Activated T-helper 1 cell treated with anti-CD3 and anti-CD28 coated beads, Interleukin-12 subunit alpha, Interleukin-12 subunit beta, Interleukin-2, Interleukin-4 antibody, amounts not matched to agents 30 ng/mL and 10 ng/mL and 1 ng/mL, durations not matched to agents 14 hours and 24 hours and 36 hours (primary cell): ENCODE measurements at regions of chr3 and their contacts with region 1.

Region 1: GRCh38 chr3:31754575-31755278 is 222.0 kb downstream of the STT3B start:
- DNase-seq: no peak
- H3K4me3 Mint-ChIP-seq: peak overlapping the region; percentile 66
- H3K27ac Mint-ChIP-seq: peak overlapping the region; percentile 94
- H3K4me1 Mint-ChIP-seq: peaks cover 61% of the 10 kb centered on the region
- H3K27me3 Mint-ChIP-seq: no peaks in the 10 kb centered on the region

Region 2: DNA sequence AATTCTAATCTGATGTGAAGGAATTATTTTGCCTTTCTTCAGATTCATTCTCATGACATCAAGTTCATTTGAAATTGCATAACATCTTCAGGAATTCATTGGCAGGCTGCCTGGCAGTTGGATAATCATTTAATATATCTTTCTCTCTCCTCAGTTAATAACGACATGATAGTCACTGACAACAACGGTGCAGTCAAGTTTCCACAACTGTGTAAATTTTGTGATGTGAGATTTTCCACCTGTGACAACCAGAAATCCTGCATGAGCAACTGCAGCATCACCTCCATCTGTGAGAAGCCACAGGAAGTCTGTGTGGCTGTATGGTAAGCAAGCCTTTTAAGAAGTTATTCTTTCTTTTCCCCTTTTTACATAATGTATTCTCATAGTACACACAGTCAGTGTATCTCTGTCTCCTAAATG is 1110.1 kb before region 1 on chr3:
- intact Hi-C with region 1: loop called (anchors 5 kb)
- DNase-seq: peak; percentile 66
- H3K4me3 Mint-ChIP-seq: peak overlapping the region; percentile 57
- H3K27ac Mint-ChIP-seq: peak overlapping the region; percentile 94
- H3K4me1 Mint-ChIP-seq: peaks cover 93% of the 10 kb centered on the region
- H3K27me3 Mint-ChIP-seq: no peaks in the 10 kb centered on the region

Region 3: DNA sequence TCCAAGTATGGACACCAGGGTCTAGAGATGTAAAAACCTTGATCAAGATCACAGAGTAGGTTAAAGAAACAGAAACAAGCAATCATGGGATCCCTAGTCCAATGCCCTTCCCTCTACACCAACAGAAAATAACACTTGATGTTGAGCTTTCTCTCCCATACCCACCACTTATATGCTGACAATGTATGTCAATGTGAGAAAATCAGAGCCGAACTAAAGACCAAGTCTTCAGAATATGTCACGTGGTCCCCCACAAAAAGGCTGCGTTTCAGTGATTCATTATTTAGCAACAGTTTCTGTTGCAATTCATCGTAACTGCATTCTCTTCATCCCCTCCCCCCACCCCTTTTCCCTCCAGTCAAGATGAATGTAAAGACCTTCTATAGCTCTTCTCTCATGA is 500.9 kb before region 1 on chr3:
- intact Hi-C with region 1: loop called (anchors 1 kb)
- DNase-seq: no peak
- H3K4me3 Mint-ChIP-seq: no peak overlapping the region
- H3K27ac Mint-ChIP-seq: peak overlapping the region; percentile 89
- H3K4me1 Mint-ChIP-seq: peaks cover 64% of the 10 kb centered on the region
- H3K27me3 Mint-ChIP-seq: peaks cover 3% of the 10 kb centered on the region

Region 4: DNA sequence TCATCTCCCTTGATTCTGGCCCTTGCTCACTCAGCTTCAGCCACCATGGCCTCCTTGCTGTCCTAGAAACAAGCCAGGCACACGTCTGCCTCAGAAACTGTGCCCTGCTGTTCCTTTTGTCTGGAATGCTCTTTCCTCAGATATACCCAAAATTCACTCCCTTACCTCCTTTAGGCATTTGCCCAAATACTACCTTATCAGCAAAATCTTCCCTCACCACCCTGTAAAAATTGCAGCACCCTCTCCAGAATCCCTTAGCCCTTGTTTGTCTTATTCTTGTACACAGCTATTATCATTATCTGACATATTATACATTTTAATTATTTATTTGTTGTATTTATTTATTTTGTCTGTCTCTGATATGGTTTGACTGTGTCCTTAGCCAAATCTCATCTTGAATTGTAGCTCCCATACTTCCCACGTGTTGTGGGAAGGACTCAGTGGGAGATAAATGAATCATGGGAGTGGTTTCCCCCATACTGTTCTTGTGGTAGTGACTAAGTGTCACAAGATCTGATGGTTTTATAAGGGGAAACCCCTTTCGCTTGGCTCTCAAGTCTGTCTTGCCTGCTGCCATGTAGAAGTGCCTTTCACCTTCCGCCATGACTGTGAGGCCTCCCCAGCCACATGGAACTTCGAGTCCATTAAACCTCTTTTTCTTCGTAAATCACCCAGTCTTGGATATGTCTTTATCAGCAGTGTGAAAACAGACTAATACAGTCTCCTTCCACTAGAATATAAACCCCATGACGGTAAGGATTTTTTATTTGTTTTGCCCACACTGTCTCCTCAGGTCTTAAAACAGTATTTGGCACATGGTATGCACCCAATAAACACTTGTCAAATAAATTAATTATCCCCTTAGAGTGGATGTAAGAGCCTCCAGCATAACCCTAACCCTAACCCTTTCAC is 282.0 kb before region 1 on chr3:
- intact Hi-C with region 1: loop called (anchors 5 kb)
- DNase-seq: peak; percentile 17
- H3K4me3 Mint-ChIP-seq: no peak overlapping the region
- H3K27ac Mint-ChIP-seq: peak overlapping the region; percentile 59
- H3K4me1 Mint-ChIP-seq: peaks cover 19% of the 10 kb centered on the region
- H3K27me3 Mint-ChIP-seq: peaks cover 9% of the 10 kb centered on the region

Region 5: GRCh38 chr3:31624083-31624709 is 130.5 kb before region 1 on chr3:
- intact Hi-C with region 1: no loop called
- DNase-seq: no peak
- H3K4me3 Mint-ChIP-seq: no peak overlapping the region
- H3K27ac Mint-ChIP-seq: peak overlapping the region; percentile 9
- H3K4me1 Mint-ChIP-seq: peaks cover 37% of the 10 kb centered on the region
- H3K27me3 Mint-ChIP-seq: no peaks in the 10 kb centered on the region

Region 6: GRCh38 chr3:31704591-31705179 is 50.0 kb before region 1 on chr3:
- intact Hi-C with region 1: loop called (anchors 1 kb)
- DNase-seq: no peak
- H3K4me3 Mint-ChIP-seq: peak overlapping the region; percentile 3
- H3K27ac Mint-ChIP-seq: peak overlapping the region; percentile 47
- H3K4me1 Mint-ChIP-seq: peaks cover 14% of the 10 kb centered on the region
- H3K27me3 Mint-ChIP-seq: no peaks in the 10 kb centered on the region

Region 7: DNA sequence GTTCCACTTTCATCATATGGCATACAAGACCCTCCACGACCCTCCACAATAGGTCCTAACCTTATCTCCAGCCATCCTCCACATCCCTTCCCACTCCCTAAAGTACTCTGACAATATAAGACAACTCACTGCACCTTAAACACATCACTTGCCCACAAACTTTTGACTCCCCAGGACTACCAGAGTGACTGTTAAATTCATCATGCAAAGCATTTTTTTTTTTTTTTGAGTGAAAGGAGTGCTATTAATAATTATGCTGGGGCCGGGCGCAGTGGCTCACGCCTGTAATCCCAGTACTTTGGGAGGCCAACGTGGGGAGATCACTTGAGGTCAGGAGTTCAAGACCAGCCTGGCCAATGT is 170.5 kb after region 1 on chr3:
- intact Hi-C with region 1: loop called (anchors 1 kb)
- DNase-seq: no peak
- H3K4me3 Mint-ChIP-seq: peak overlapping the region; percentile 7
- H3K27ac Mint-ChIP-seq: peak overlapping the region; percentile 21
- H3K4me1 Mint-ChIP-seq: peaks cover 37% of the 10 kb centered on the region
- H3K27me3 Mint-ChIP-seq: no peaks in the 10 kb centered on the region

Region 8: GRCh38 chr3:32143849-32144757 is 389.4 kb after region 1 on chr3:
- intact Hi-C with region 1: loop called (anchors 10 kb)
- DNase-seq: peak; percentile 36
- H3K4me3 Mint-ChIP-seq: no peak overlapping the region
- H3K27ac Mint-ChIP-seq: no peak overlapping the region
- H3K4me1 Mint-ChIP-seq: peaks cover 22% of the 10 kb centered on the region
- H3K27me3 Mint-ChIP-seq: no peaks in the 10 kb centered on the region